AG04449 (cell line): ENCODE measurements at regions of chr1 and their contacts with region 1.

Region 1: DNA sequence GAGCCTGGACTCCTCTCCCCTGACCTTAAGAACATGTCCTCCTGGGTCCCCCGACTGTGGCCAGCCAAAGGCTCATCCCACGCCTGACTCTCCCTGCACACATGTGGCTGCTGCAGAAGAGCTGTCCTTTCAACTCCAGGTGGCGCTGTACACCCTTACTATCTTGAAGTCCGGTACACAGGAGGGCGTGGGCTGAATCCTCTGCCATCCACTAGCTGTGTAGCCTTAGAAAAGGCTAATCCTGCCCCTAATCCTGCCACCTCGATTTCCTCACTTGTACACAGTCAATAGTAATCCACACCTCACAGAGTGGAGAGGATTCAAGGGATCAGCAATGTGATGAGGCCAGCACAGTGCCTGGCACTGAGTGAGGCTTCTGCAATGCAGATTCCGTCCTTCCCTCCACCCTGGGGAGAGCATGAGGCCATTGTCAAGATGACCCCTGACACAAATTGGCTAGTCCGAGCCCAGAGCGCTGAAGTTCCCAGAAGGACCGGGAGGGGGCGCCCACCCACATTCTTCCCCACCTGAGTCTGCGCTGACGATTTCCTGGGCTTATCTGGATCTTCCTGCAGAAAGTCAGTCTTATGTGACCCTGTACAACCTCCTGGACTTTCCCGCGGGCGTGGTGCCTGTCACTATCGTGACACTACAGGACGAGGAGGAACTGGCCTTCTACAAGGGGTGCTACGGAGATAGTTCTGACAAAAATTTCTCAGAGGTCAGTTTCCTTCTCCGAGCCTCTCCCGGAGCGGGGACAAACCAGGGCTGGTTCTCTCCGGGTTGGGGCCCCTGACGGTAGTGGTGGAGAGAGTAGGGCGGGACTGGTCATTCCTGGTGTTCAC is 47.1 kb upstream of the DMBX1 start:
- DNase-seq: peak; percentile 5
- H3K4me3 ChIP-seq: peak overlapping the region; percentile 54
- CTCF ChIP-seq: peak; percentile 96

Region 2: GRCh38 chr1:46132529-46133180 is 309.9 kb before region 1 on chr1 and contains the start of gene PIK3R3:
- CTCF ChIA-PET with region 1: no interaction called
- POLR2A ChIA-PET with region 1: no interaction called
- DNase-seq: peak; percentile 93
- H3K4me3 ChIP-seq: peak within 1 kb of the TSS; percentile 83
- CTCF ChIP-seq: no peak

Region 3: GRCh38 chr1:46300673-46301405 is 141.7 kb before region 1 on chr1:
- CTCF ChIA-PET with region 1: no interaction called
- POLR2A ChIA-PET with region 1: no interaction called
- DNase-seq: no peak
- H3K4me3 ChIP-seq: peak overlapping the region; percentile 78
- CTCF ChIP-seq: no peak

Region 4: DNA sequence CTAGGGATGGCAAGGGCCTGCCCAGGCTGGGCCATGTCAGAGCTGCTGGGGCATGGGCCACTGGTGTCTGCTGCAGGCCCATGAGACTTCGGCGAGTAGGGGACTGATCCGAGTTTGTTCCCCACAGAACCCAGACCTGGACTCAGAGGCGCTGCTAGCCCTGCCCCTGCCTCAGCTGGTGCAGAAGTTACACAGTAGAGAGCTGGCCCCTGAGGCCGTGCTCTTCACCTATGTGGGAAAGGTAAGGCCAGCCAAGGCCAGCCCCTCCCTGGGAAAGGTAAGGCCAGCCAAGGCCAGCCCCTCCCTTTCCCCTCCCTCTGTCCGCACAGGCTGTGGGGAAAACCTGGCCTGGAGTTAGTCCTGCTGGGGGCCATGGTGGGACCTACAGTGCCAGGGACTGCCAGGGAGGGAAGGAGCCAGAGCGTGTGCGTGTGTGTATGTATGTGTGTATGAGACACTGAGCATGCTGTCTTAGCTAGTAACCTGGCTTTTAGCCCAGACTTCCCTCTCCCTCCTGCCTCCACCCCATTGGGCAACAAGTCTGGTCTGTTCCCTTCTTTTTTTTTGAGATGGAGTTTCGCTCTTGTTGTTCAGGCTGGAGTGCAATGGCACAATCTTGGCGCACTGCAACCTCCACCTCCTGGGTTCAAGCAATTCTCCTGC is 40.4 kb before region 1 on chr1:
- CTCF ChIA-PET with region 1: interaction called, 14 read pairs
- POLR2A ChIA-PET with region 1: no interaction called
- DNase-seq: peak; percentile 87
- H3K4me3 ChIP-seq: no peak overlapping the region
- CTCF ChIP-seq: no peak

Region 5: GRCh38 chr1:46431691-46432090 is 10.8 kb before region 1 on chr1:
- CTCF ChIA-PET with region 1: interaction called, 86 read pairs
- POLR2A ChIA-PET with region 1: interaction called, 3 read pairs
- DNase-seq: no peak
- H3K4me3 ChIP-seq: no peak overlapping the region
- CTCF ChIP-seq: no peak

Region 6: DNA sequence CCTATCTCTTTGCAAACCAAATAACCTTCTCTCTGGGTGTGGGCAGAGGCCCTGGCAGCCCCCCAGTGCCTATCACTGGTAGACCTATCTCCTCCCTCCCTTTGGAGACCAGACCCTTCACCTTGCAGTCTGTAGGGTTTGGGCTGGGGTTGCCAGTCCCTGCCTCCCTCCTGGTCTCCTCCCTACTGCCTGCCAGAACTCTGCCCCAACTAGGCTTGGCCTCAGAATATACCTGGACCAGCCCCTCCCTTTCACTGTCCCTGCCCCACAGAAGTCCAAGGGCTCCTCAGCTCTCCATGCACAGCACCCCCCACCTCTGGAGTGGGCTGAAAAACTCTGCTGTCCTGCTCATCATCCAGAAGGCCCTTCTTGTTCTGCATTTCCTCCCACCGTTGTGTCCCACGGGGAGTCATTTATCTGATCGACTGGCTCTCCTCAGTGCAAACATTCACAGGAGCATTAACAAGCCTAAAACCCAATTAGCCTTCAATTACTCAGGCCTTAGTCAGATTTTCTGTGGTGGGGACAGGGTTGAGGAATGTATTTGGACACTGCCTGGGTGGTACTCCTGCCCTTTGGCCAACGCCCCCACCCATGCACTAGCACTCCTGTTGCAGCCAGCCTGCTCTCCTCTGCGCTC is 19.4 kb after region 1 on chr1:
- CTCF ChIA-PET with region 1: interaction called, 47 read pairs
- POLR2A ChIA-PET with region 1: no interaction called
- DNase-seq: no peak
- H3K4me3 ChIP-seq: no peak overlapping the region
- CTCF ChIP-seq: no peak

Region 7: DNA sequence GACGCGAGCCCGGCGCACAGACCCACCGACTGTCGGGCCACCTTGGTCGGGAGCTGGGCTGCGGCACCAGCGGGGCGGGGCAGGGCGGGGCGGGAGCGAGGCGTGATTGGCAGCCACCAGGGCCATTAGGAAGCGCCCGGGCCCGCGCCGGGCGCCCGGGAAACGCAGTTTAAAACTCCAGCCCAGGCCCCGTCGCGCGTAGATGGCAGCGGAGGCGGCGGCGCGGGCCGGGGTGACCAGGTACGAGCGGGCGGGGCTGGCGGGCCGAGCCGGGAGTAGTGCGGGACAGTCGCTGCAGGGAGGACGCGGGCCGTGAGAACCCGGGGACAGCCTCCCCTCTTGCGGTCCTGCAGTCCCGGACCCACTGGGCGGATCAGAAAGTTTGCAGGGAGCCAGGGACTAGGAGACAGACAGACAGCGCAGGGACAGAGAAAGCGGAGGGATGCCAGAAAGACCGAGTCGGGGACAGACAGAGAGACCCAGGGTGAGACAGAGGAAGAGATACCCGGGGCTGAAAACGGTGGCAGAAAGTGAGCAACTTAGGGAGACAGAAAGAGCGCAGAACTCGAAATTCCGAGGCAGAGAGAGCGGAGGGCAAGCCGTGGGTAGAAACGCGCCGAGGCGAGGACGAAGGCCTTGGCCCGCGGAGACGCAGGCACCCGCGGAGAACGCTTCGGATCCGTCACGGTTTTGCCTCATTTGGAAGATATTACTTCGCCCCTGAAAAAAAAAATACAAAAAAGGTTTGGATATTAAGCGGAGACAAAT is 47.3 kb after region 1 on chr1 and contains the start of gene DMBX1:
- CTCF ChIA-PET with region 1: interaction called, 14 read pairs
- POLR2A ChIA-PET with region 1: no interaction called
- DNase-seq: no peak
- H3K4me3 ChIP-seq: no peak within 1 kb of the TSS
- CTCF ChIP-seq: no peak

Region 8: GRCh38 chr1:46527474-46528296 is 85.1 kb after region 1 on chr1:
- CTCF ChIA-PET with region 1: interaction called, 429 read pairs
- POLR2A ChIA-PET with region 1: no interaction called
- DNase-seq: no peak
- H3K4me3 ChIP-seq: no peak overlapping the region
- CTCF ChIP-seq: peak; percentile 95

Region 9: GRCh38 chr1:46547481-46548383 is 105.2 kb after region 1 on chr1:
- CTCF ChIA-PET with region 1: interaction called, 29 read pairs
- POLR2A ChIA-PET with region 1: no interaction called
- DNase-seq: no peak
- H3K4me3 ChIP-seq: no peak overlapping the region
- CTCF ChIP-seq: peak; percentile 32

Region 10: DNA sequence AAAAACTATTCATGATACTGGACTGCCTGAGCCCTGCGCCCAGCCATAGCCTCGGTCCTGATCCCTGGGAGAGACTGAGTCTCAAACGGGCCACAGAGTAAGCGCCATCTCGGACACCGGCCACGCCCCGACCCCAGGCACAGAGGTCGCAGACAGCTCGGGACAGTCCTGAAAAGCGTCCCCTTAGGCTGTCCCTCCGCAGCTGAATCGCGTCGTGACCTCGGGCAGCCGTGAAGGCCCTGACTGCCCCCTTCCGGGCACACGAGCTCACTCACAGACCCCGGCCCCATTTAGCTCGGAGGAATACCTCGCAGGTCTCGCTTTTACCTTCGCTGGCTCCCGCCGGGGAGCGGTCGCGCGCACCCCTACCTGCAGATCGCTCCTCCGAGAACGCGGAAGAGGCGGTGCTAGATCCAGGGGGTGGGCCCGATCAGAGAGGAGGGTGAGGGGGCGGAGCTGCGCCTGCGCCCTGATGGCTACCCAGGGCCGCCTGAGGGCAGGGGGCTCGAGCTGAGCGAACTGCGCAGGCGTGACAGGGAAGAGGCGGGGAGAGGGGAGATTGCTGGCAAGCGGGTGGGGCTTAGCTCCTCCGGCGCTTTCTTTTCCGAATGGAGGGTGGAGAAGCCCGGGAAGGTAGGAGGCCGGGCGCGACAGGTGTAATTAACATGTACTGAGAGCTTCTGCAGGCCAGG is 161.5 kb after region 1 on chr1 and contains the start of gene MKNK1:
- CTCF ChIA-PET with region 1: no interaction called
- POLR2A ChIA-PET with region 1: no interaction called
- DNase-seq: peak; percentile 46
- H3K4me3 ChIP-seq: peak within 1 kb of the TSS; percentile 98
- CTCF ChIP-seq: peak; percentile 15